Activated B cell treated with CpG ODN at 0.5 μM for 24 hours (primary cell): ENCODE measurements at regions of chr19 and their contacts with region 1.

Region 1: GRCh38 chr19:12666265-12667048 is at the starts of genes MAN2B1 and WDR83:
- DNase-seq: peak; percentile 83
- ATAC-seq: peak; percentile 70
- H3K4me3 Mint-ChIP-seq: peak within 1 kb of the TSS; percentile 97
- H3K27ac Mint-ChIP-seq: peak within 1 kb of the TSS; percentile 93
- H3K4me1 Mint-ChIP-seq: peaks cover 69% of the 10 kb centered on the region
- H3K27me3 Mint-ChIP-seq: no peaks in the 10 kb centered on the region
- CTCF ChIP-seq: no peak
- total RNA-seq, gene MAN2B1: 251 and 291 TPM in 2 replicates
- total RNA-seq, gene WDR83: 17.7 and 20.8 TPM in 2 replicates

Region 2: GRCh38 chr19:12513531-12514061 is 152.9 kb before region 1 on chr19:
- CTCF ChIA-PET with region 1: no interaction called
- POLR2A ChIA-PET with region 1: no interaction called
- intact Hi-C with region 1: no loop called
- DNase-seq: no peak
- ATAC-seq: no peak
- H3K4me3 Mint-ChIP-seq: no peak overlapping the region
- H3K27ac Mint-ChIP-seq: no peak overlapping the region
- H3K4me1 Mint-ChIP-seq: no peaks in the 10 kb centered on the region
- H3K27me3 Mint-ChIP-seq: no peaks in the 10 kb centered on the region
- CTCF ChIP-seq: no peak

Region 3: DNA sequence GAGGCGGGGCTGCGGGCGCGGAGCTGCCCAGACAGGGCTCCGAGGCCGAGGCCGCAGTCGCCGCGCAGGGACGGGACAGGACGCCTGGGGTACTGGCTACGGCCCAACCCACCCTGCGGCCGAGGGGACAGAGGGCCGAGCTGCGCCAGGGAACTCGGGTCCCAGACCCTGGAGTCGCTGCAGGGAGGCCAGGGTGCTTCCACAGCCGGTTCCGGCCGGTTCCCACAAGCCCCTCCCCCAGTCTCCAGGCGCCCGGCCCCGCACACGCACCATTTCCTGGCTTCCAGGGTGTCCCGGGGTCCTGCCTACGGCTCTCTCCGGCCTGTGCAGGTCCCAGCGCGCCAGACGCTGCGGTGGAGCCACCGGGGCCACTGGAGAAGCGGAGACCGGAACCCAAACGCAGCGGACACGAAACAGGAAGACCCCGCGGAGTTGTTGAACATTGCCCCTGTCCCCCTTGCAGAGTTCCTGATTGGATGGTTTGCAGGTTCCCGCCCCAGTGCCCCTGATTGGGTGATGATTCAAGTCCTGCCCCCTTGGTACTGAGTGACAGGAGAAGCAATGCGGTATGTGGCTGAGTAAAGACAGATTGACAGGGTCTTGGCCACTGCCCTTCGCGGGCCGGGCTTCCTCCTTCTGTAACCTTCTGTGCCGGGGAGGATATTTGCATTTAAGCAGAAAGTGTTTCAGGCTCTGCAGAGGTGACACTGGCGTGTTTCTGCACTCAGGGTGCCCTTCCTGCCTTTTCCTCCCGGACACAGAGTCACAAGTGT is 115.2 kb before region 1 on chr19 and contains the start of gene ZNF564:
- CTCF ChIA-PET with region 1: no interaction called
- POLR2A ChIA-PET with region 1: interaction called, 5 read pairs
- intact Hi-C with region 1: loop called (anchors 1 kb)
- DNase-seq: peak; percentile 81
- ATAC-seq: peak; percentile 98
- H3K4me3 Mint-ChIP-seq: peak within 1 kb of the TSS; percentile 98
- H3K27ac Mint-ChIP-seq: peak within 1 kb of the TSS; percentile 94
- H3K4me1 Mint-ChIP-seq: peaks cover 48% of the 10 kb centered on the region
- H3K27me3 Mint-ChIP-seq: no peaks in the 10 kb centered on the region
- CTCF ChIP-seq: no peak
- total RNA-seq, gene ZNF564: 23.0 and 26.6 TPM in 2 replicates

Region 4: DNA sequence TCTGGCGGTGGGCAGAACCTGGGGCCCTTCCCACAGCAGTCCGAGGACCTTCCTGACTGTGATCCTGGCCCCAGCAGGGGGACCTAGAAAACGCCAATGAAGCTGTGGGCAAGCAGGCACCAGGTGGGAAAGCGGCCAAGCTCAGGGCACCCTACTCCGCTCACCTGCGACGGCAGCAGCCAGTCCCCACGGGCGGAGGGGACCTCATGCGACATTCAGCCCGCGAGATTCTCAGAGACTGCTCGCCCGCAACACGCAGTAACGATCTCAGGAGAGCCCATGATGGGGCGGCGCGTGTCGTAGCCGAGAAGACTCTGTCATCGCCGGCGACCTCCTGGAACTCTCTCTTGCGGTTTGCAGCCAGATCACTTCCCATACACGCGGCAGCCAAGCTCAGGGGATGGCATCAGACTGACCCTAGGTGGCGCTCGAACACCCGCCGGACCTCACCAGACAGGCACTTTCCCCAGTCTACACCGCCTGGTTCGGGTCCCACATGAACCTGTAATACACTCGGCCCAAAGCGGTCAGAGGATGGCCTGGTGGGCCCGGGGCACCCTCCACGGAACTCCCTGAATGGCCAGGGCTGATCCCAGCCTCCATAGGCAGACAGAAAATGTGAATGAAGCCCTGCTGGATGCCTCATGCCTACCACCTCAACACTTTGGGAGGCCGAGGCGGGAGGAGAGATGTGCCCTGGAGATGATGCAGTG is 26.4 kb before region 1 on chr19:
- CTCF ChIA-PET with region 1: interaction called, 15 read pairs
- POLR2A ChIA-PET with region 1: interaction called, 18 read pairs
- intact Hi-C with region 1: loop called (anchors 1 kb)
- DNase-seq: peak; percentile 75
- ATAC-seq: peak; percentile 95
- H3K4me3 Mint-ChIP-seq: peak overlapping the region; percentile 79
- H3K27ac Mint-ChIP-seq: peak overlapping the region; percentile 46
- H3K4me1 Mint-ChIP-seq: peaks cover 23% of the 10 kb centered on the region
- H3K27me3 Mint-ChIP-seq: no peaks in the 10 kb centered on the region
- CTCF ChIP-seq: no peak

Region 5: DNA sequence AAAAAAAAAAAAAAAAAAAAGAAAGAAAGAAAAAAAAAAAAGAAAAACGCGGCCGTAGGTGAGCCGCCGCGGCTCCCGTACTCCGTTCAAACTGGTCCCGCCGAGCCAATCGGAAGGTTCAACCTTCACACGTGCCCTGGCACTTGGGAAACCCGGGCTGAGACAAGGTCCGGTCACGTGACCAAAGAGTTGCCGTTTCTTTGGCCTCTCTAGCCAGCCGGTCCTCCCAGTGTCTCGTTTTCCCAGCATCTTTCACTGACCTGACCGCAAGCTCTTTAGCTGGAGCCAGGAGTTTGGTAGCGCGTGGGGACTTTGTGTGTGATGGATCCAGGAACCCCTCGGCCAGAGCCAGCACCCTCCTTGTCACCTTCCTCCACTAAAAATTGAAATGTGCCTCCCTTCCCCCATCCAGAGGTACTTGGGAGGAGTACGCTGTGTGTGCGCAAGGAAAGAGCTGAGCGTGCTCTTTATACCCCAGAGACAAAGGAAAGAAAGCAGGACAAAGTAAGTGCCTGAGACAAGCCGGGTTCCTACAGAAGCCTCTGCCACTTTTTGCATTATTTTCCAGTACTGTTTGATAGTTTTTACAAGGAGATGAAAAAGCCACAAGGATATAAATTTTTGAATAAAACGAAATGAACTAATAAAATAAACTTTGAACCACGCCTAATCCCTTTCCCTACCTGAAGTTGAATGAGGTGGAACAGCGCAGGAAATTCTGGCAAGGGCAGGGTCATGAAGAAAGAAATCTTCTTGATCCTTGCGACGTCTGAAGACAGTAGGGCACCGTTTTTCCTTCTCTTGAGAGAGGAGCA is 56.3 kb after region 1 on chr19:
- CTCF ChIA-PET with region 1: no interaction called
- POLR2A ChIA-PET with region 1: interaction called, 6 read pairs
- intact Hi-C with region 1: loop called (anchors 5 kb)
- DNase-seq: peak; percentile 75
- ATAC-seq: peak; percentile 84
- H3K4me3 Mint-ChIP-seq: peak overlapping the region; percentile 92
- H3K27ac Mint-ChIP-seq: peak overlapping the region; percentile 90
- H3K4me1 Mint-ChIP-seq: peaks cover 43% of the 10 kb centered on the region
- H3K27me3 Mint-ChIP-seq: no peaks in the 10 kb centered on the region
- CTCF ChIP-seq: no peak